ENCODE measurements at regions of chr6 and their contacts with region 1.

Region 1: GRCh38 chr6:42166444-42167141 is 6.6 kb upstream of the GUCA1A start:
- DNase-seq: peak; percentile 94
- ATAC-seq: peak; percentile 95
- H3K4me3 ChIP-seq: no peak overlapping the region; the same call in 1 of the 2 replicates
- H3K27ac ChIP-seq: no peak overlapping the region
- H3K4me1 ChIP-seq: peaks cover 8% of the 10 kb centered on the region
- H3K27me3 ChIP-seq: no peaks in the 10 kb centered on the region
- CTCF ChIP-seq: peak; percentile 97

Region 2: DNA sequence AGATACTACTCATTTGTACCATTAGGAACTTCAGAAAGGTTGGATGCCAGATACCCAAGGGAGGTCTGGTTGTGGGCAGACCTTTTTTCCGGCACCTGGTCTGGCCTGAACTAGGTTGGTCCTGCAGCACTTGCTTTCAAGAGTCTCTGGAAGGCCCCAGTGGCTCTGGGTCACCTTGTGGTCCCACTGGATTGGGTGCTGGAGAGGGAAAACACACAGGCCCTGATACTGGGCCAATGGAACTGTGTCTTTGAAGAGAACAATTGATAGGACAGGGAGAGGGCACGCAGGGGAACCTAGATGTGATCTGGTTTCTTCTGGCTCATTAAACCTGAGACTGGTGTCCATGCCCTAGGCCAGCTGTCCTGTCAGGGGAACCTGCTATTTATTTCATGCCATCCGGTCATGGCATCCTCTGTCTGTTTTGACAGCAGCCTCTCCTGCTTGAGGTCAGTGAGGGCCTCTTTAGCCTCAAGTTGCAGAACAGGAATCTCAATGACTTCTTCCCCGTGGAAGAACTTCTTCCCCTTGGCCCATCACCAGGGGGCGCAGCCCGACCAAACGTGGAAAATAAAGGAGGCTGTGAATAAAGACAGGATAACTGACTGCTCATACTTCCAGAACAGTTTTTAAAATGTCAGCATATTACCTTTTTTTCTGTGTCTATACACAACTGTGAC is 91.3 kb before region 1 on chr6:
- CTCF ChIA-PET with region 1: interaction called, 3 read pairs
- POLR2A ChIA-PET with region 1: no interaction called
- intact Hi-C with region 1: loop called (anchors 1 kb)
- DNase-seq: peak; percentile 93
- ATAC-seq: peak; percentile 88
- H3K4me3 ChIP-seq: no peak overlapping the region
- H3K27ac ChIP-seq: no peak overlapping the region
- H3K4me1 ChIP-seq: peaks cover 4% of the 10 kb centered on the region; the same call in 1 of the 2 replicates
- H3K27me3 ChIP-seq: no peaks in the 10 kb centered on the region
- CTCF ChIP-seq: peak; percentile 95

Region 3: DNA sequence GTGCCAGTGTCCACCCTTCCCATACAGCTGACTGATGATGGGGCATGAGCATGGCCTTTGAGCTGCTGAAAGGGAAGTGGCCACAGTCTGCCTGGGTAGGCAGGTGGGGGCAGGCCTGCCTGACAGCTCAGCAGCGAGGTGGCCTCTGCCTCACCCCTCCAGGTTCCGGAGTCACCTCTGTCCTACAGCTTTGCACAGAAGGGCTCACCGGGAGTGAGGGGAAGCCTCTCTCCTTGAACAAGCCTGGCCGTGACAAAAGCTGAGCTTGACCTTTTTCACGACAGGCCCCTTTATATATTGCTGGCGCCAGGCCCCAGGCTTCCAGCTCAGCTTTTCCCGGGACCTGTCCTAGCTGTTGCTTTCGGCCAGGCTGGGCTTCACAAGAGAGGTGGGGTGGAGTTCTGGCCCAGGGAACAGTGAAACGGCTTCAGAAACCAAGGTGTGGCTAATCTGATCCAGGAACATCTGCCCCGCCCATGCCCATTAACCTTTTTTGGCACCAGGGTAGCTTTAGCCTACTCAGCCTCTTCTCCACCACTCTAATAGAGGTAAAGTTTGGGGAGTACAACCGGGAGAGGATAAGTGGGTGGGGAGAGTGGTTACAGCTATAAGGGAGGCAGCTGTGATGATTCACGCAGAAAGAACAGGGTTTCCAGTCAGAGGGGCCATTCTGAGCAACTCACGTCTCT is 67.1 kb before region 1 on chr6:
- CTCF ChIA-PET with region 1: interaction called, 6 read pairs
- POLR2A ChIA-PET with region 1: no interaction called
- intact Hi-C with region 1: loop called (anchors 1 kb)
- DNase-seq: peak; percentile 78
- ATAC-seq: peak; percentile 78
- H3K4me3 ChIP-seq: peak overlapping the region; percentile 18; the same call in 1 of the 2 replicates
- H3K27ac ChIP-seq: peak overlapping the region; percentile 94
- H3K4me1 ChIP-seq: peaks cover 31% of the 10 kb centered on the region
- H3K27me3 ChIP-seq: no peaks in the 10 kb centered on the region
- CTCF ChIP-seq: no peak

Region 4: DNA sequence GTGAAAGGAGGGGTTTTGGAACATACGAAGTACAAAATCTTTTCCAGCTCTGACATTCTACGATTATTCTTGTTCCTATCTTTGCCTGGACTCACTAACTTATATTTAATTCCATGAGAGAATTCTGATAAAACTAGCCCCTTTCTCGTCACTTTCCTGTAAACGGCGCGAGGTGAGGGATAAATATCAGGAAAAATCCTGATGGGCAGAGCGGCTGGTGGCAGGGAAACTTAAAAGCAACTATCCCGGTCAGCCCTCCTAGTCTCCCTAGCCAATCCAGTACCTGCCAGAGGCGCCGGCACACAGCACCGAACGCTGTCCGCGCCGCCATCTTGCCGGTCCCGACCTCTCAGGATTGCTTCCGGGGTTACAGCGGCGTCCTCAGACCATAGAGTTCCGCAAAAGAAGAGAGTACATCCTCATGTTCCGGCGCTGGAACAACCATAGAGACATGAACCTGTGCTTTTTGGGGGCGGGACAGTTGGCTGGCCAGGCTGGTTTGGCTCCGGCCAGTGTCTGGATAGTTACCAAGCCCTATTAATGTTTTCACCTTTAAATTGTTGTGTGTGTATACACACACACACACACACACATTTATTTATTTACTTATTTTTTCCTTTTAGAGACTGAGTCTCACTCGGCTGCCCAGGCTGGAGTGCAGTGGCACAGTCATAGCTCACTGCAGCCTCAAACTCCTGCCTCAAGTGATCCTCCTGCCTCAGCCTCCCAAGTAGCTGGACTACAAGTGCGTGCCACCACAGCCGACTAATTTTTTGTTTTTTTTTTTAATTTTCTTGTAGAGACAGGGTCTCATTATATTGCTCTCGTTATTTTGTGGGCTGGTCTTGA is 51.1 kb after region 1 on chr6 and contains the start of gene MRPS10:
- CTCF ChIA-PET with region 1: interaction called, 12 read pairs
- POLR2A ChIA-PET with region 1: no interaction called
- intact Hi-C with region 1: loop called (anchors 1 kb)
- DNase-seq: peak; percentile 95
- ATAC-seq: peak; percentile 69
- H3K4me3 ChIP-seq: peak within 1 kb of the TSS; percentile 85
- H3K27ac ChIP-seq: peak within 1 kb of the TSS; percentile 77
- H3K4me1 ChIP-seq: peaks cover 74% of the 10 kb centered on the region
- H3K27me3 ChIP-seq: no peaks in the 10 kb centered on the region
- CTCF ChIP-seq: no peak
- total RNA-seq, gene MRPS10: 72.2 and 82.1 TPM in 2 replicates

Region 5: GRCh38 chr6:42230345-42231321 is 64.0 kb after region 1 on chr6:
- CTCF ChIA-PET with region 1: interaction called, 3 read pairs
- POLR2A ChIA-PET with region 1: interaction called, 3 read pairs
- intact Hi-C with region 1: loop called (anchors 1 kb)
- DNase-seq: peak; percentile 66
- ATAC-seq: no peak
- H3K4me3 ChIP-seq: no peak overlapping the region
- H3K27ac ChIP-seq: peak overlapping the region; percentile 98
- H3K4me1 ChIP-seq: peaks cover 47% of the 10 kb centered on the region
- H3K27me3 ChIP-seq: no peaks in the 10 kb centered on the region
- CTCF ChIP-seq: peak; percentile 88

Measured in PC-3 (cell line).